BJ (cell line): ENCODE measurements at regions of chr2 and their contacts with region 1.

Region 1: GRCh38 chr2:218466016-218466521 is 47.1 kb downstream of the VIL1 start:
- DNase-seq: peak; percentile 5
- H3K4me3 ChIP-seq: no peak overlapping the region
- H3K27me3 ChIP-seq: no peaks in the 10 kb centered on the region
- CTCF ChIP-seq: peak; percentile 40

Region 2: DNA sequence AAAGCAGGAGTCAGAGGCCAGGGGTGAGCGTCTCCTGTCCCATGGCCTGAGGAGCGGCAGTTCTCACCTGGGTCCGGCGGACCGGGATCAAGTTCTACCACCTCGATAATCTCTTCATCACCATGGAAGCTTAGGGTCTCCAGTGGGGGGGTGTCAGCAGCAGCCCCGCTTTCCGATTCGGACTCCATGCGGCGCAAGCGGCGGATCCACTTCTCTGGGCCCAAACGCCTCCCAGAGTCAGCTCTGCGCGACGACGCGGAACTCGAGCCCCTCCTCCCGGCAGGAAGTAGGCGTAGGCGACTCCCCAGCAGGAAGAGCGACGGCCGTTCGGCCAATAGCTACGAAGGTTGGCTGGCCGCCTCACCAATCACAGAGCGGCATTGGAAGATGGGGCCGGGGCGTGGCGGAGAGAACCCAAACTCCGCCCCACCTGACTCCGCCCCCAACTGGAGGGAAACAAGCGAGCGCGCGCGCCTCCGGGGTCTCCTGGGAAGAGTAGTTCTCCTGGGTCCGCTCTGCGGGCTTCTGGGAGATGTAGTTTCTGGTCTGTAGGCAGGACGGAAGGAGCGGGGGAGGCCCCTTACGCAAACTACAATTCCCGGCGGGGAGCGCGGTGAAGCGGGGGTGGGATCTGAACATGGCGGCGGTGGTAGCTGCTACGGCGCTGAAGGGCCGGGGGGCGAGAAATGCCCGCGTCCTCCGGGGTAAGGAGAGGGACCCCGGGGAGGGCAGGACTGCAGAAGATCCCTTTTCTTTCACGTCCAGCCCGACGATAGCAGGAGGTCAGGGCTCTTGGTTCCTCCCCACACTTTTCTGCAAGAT is 196.0 kb before region 1 on chr2 and contains the starts of genes AAMP and PNKD:
- CTCF ChIA-PET with region 1: interaction called, 11 read pairs
- POLR2A ChIA-PET with region 1: no interaction called
- DNase-seq: peak; percentile 97
- H3K4me3 ChIP-seq: peak within 1 kb of the TSS; percentile 83
- H3K27me3 ChIP-seq: no peaks in the 10 kb centered on the region
- CTCF ChIP-seq: no peak
- polyA plus RNA-seq, gene AAMP: 65.1 and 84.9 TPM in 2 replicates
- polyA plus RNA-seq, gene PNKD: 44.5 and 54.5 TPM in 2 replicates

Region 3: GRCh38 chr2:218406209-218406948 is 59.7 kb before region 1 on chr2:
- CTCF ChIA-PET with region 1: interaction called, 17 read pairs
- POLR2A ChIA-PET with region 1: interaction called, 21 read pairs
- DNase-seq: peak; percentile 76
- H3K4me3 ChIP-seq: peak overlapping the region; percentile 28
- H3K27me3 ChIP-seq: no peaks in the 10 kb centered on the region
- CTCF ChIP-seq: peak; percentile 90

Region 4: GRCh38 chr2:218476676-218477075 is 10.6 kb after region 1 on chr2:
- CTCF ChIA-PET with region 1: interaction called, 20 read pairs
- POLR2A ChIA-PET with region 1: no interaction called
- DNase-seq: peak; percentile 17
- H3K4me3 ChIP-seq: no peak overlapping the region
- H3K27me3 ChIP-seq: no peaks in the 10 kb centered on the region
- CTCF ChIP-seq: no peak